PC-3 (cell line): ENCODE measurements at regions of chr7 and their contacts with region 1.

Region 1: DNA sequence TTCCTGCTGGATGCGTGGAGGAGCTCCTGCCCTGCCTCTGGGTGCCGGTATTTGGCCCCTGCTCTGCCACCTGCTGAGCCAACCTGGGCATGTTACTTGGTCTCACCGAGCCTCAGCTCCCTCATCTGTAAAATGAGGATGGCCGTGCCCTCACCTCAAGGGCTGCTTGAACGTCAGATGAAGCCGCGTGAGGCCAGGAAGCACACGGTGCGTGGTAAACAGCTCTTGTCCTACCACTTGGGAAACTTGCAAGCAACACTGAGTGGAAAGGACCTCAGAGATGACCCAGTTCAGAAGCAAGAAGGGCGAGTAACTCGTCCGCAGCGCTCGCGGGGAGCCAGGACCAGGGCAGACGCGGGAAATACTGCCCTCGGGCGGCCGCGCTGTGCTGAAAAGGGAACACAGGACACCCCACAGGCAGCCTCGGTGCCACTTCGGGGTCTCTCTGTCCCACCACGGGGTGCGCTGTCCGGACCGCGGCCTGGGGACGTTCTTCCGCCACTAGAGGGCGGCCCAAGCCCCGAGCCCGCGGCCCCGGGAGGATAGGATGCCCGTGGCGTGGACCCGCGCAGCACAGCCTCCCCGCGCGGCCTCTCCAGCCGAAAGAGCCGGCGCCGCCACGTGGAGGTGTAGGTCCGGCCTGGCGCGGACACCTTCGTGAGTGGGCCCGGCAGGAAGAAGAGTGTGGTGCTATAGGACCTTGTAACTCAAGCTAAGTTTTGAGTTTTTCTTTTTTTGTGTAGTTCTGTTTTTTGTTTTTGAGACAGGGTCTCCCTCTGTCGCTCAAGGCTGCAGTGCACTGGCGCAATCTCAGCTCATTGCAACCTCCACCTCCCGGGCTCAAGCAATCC is 94.1 kb downstream of the PRKAG2 start:
- DNase-seq: peak; percentile 60
- ATAC-seq: peak; percentile 96
- H3K4me3 ChIP-seq: peak overlapping the region; percentile 49
- H3K27ac ChIP-seq: no peak overlapping the region
- H3K4me1 ChIP-seq: no peaks in the 10 kb centered on the region
- H3K27me3 ChIP-seq: no peaks in the 10 kb centered on the region
- CTCF ChIP-seq: peak; percentile 94

Region 2: GRCh38 chr7:151484971-151485707 is 297.7 kb before region 1 on chr7:
- CTCF ChIA-PET with region 1: no interaction called
- POLR2A ChIA-PET with region 1: no interaction called
- intact Hi-C with region 1: no loop called
- DNase-seq: peak; percentile 68
- ATAC-seq: peak; percentile 98
- H3K4me3 ChIP-seq: no peak overlapping the region
- H3K27ac ChIP-seq: peak overlapping the region; percentile 67
- H3K4me1 ChIP-seq: peaks cover 18% of the 10 kb centered on the region
- H3K27me3 ChIP-seq: no peaks in the 10 kb centered on the region
- CTCF ChIP-seq: no peak

Region 3: DNA sequence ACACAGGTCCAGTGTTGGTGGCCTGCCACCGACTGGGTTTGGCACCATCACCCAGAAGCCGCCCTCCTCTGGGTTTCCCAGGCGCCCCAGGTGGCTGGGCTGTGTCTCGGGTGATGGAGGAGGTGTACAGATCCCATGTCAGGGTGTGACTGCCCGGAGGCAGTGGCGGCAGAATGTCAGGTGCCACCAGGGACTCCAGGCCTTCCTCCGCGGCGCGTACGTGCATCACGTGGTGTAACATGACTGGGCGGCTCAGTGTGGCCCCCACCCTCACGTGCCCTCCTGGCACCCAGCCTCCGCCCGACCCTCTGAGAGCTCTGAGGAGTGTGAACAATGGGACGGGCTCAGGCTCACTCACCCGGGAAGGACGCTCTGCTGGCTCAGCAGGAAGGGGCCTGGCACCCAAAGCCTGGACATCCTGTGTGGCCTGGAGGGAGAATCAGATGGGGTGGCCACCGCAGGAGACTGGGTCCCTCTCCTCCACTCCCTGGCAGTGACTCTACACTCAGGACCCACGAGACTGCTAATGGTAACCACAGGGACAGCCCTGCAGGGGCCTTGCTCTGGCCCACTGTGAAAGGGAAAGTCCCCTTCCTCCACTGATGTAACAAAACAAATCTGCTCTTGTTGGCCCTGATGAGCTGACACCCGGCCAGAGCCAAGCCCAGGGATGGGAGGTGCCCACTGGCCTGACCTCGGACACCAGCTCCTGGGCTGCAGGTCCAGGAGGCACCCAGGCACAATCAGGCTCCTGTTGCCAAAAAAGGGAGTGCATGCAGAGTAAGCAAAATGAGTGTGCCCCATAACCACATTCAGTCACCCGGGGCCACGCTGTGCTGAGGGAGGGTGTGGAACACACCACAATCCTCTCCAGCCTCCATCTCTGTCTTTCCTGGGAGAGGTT is 70.7 kb before region 1 on chr7:
- CTCF ChIA-PET with region 1: no interaction called
- POLR2A ChIA-PET with region 1: no interaction called
- intact Hi-C with region 1: no loop called
- DNase-seq: no peak
- ATAC-seq: peak; percentile 38
- H3K4me3 ChIP-seq: no peak overlapping the region
- H3K27ac ChIP-seq: no peak overlapping the region
- H3K4me1 ChIP-seq: no peaks in the 10 kb centered on the region
- H3K27me3 ChIP-seq: no peaks in the 10 kb centered on the region
- CTCF ChIP-seq: no peak

Region 4: DNA sequence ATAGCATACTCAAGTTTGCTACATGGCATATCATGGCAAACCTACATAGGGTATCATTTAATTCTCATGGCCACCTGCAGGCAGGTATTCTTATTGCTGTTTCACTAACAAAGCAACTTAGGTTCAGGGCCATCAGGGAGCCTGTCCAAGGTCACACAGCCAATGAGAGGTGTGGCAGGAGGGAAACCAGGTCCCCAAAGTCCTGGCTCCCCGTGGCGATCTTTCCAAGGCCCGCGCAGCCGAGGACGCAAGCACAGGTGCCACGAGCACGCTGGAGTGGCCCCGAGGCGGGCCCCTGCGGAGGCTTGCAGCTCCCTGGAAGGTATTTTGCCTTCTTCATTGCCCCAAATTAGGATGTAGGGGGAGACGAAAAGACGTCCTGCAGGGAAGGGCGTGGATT is 73.3 kb after region 1 on chr7:
- CTCF ChIA-PET with region 1: interaction called, 3 read pairs
- POLR2A ChIA-PET with region 1: no interaction called
- intact Hi-C with region 1: loop called (anchors 5 kb)
- DNase-seq: peak; percentile 19
- ATAC-seq: no peak
- H3K4me3 ChIP-seq: no peak overlapping the region
- H3K27ac ChIP-seq: no peak overlapping the region
- H3K4me1 ChIP-seq: peaks cover 16% of the 10 kb centered on the region
- H3K27me3 ChIP-seq: no peaks in the 10 kb centered on the region
- CTCF ChIP-seq: peak; percentile 47; the same call in 1 of the 2 replicates

Region 5: DNA sequence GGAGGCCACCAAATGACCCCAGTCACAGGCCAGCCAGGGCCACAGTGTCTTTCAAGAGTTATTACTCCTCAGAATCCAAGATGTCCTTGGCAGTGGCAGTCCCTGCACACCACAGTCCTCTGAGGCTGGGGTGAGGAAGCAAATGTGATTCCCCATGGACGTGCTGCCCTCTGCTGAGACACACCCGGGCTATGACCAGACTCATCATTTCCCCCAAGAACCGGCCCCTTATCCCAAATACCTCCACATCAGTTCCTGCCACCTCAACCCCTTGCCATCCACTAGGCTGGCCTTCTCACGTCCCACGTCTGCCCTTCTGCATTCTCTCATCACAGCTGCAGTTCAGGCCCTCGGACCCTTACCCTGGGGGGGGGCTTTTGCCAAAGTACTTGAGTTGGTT is 89.1 kb after region 1 on chr7:
- CTCF ChIA-PET with region 1: interaction called, 6 read pairs
- POLR2A ChIA-PET with region 1: no interaction called
- intact Hi-C with region 1: loop called (anchors 2 kb)
- DNase-seq: peak; percentile 48
- ATAC-seq: no peak
- H3K4me3 ChIP-seq: no peak overlapping the region
- H3K27ac ChIP-seq: no peak overlapping the region
- H3K4me1 ChIP-seq: peaks cover 14% of the 10 kb centered on the region
- H3K27me3 ChIP-seq: peaks cover 5% of the 10 kb centered on the region; the same call in 1 of the 2 replicates
- CTCF ChIP-seq: peak; percentile 52